RWPE1 (cell line): ENCODE measurements at regions of chr4 and their contacts with region 1.

Region 1: DNA sequence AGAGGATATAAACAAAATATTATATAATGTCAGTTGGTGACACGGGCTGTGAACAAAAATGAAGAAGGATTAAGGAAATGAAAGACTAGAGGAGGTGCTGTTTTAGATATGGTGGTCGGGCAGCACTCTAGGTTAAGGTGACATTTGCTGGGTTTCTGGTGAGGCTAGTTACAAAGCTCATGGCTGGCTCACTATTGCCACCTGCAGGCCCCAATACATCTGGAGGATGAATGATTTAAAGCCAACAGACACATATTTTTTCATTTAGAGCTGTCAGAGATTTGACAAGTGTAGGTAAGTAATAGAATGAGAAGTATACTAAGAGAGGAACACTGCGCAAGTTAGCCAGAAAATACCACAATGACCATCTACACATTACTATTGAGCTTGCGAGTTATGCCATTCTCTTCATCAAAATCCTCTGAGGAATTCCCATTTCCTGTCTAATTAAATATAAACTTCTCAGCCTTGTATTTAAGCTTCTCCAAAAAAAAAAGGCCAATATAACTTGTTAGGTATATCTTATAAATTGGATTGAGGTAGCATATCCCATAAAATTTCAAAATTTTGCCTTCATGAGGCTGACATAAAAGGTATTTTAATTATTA is 6.4 kb upstream of the FGG start:
- DNase-seq: peak; percentile 52
- H3K27ac ChIP-seq: no peak overlapping the region
- CTCF ChIP-seq: peak; percentile 67

Region 2: DNA sequence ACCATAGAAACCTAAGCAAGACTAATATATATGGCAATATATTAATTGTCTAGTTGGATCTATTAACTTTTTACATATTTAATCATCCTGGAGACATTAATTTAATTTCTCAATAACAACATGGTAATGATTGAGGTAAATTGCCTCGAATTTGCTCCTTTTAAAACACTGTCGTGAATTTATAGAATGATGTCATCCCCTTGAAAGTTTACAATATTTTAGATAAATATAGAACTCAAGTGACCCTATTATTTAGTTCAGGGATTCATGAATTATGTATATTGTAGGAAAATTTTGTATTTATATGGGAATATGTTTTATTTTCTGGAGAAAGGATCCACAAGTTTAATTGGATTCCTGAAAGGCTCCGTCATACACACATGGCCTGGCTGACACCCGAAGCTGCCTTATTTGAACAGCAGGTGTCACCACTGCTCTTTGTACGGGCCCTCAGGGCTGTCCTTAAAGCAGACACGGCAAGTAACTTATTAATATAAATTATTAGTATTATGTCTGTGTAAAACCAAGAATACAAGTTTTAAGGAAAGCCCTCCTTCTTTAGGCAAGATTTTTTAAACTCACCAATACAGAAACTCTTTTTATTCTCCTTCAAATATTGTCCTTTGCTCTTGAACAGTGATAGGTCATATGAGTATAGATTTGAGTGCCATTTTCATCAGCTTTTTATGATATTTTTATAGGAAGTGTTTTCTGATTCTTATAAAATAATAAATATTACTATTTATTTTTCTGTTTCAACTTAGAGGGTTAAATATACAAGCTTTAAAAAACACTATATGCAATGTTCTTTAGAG is 66.7 kb before region 1 on chr4:
- CTCF ChIA-PET with region 1: interaction called, 28 read pairs
- POLR2A ChIA-PET with region 1: interaction called, 3 read pairs
- DNase-seq: peak; percentile 71
- H3K27ac ChIP-seq: no peak overlapping the region
- CTCF ChIP-seq: peak; percentile 87

Region 3: GRCh38 chr4:154559494-154560418 is 59.1 kb before region 1 on chr4:
- CTCF ChIA-PET with region 1: interaction called, 62 read pairs
- POLR2A ChIA-PET with region 1: no interaction called
- DNase-seq: peak; percentile 57
- H3K27ac ChIP-seq: no peak overlapping the region
- CTCF ChIP-seq: peak; percentile 52